H1 (cell line): ENCODE measurements at regions of chr14 and their contacts with region 1.

Region 1: GRCh38 chr14:25132732-25133422 is 82.9 kb upstream of the STXBP6 start:
- DNase-seq: peak; percentile 60 to 78
- H3K4me3 ChIP-seq: peak overlapping the region in 1 of 4 experiments; percentile 28; a peak in 2 of 8 replicates
- H3K27ac ChIP-seq: no peak overlapping the region
- H3K4me1 ChIP-seq: no peaks in the 10 kb centered on the region
- H3K27me3 ChIP-seq: peaks cover 0 to 8% (median 5%) of the 10 kb centered on the region in 4 experiments; a peak in 3 of 7 replicates
- CTCF ChIP-seq: peak; percentile 75 to 87 (median 80)
- EP300 ChIP-seq: no peak
- POLR2A ChIP-seq: no peak
- RAD21 ChIP-seq: peak; percentile 78 to 81

Region 2: GRCh38 chr14:24734878-24735500 is 397.9 kb before region 1 on chr14:
- CTCF ChIA-PET with region 1: interaction called, 15 read pairs
- POLR2A ChIA-PET with region 1: no interaction called
- DNase-seq: no peak
- H3K4me3 ChIP-seq: no peak overlapping the region
- H3K27ac ChIP-seq: no peak overlapping the region
- H3K4me1 ChIP-seq: peaks cover 0 to 3% (median 0%) of the 10 kb centered on the region in 4 experiments; a peak in 3 of 7 replicates
- H3K27me3 ChIP-seq: no peaks in the 10 kb centered on the region
- CTCF ChIP-seq: peak in 2 of 3 experiments; percentile 61 to 65; a peak in 3 of 4 replicates
- EP300 ChIP-seq: no peak
- POLR2A ChIP-seq: no peak
- RAD21 ChIP-seq: peak; percentile 70 to 75

Region 3: GRCh38 chr14:24774187-24774915 is 358.5 kb before region 1 on chr14:
- CTCF ChIA-PET with region 1: no interaction called
- POLR2A ChIA-PET with region 1: no interaction called
- DNase-seq: no peak
- H3K4me3 ChIP-seq: no peak overlapping the region
- H3K27ac ChIP-seq: no peak overlapping the region
- H3K4me1 ChIP-seq: peaks cover 0 to 2% (median 0%) of the 10 kb centered on the region in 4 experiments; a peak in 1 of 7 replicates
- H3K27me3 ChIP-seq: no peaks in the 10 kb centered on the region
- CTCF ChIP-seq: no peak
- EP300 ChIP-seq: no peak
- POLR2A ChIP-seq: no peak
- RAD21 ChIP-seq: no peak

Region 4: GRCh38 chr14:24941719-24942118 is 191.2 kb before region 1 on chr14:
- CTCF ChIA-PET with region 1: no interaction called
- POLR2A ChIA-PET with region 1: no interaction called
- DNase-seq: no peak
- H3K4me3 ChIP-seq: peak overlapping the region in 1 of 4 experiments; percentile 14; a peak in 1 of 8 replicates
- H3K27ac ChIP-seq: peak overlapping the region; percentile 37; the same call in 1 of the 2 replicates
- H3K4me1 ChIP-seq: peaks cover 3 to 18% (median 12%) of the 10 kb centered on the region in 4 experiments; a peak in 5 of 7 replicates
- H3K27me3 ChIP-seq: no peaks in the 10 kb centered on the region
- CTCF ChIP-seq: no peak
- EP300 ChIP-seq: no peak
- POLR2A ChIP-seq: no peak
- RAD21 ChIP-seq: no peak

Region 5: DNA sequence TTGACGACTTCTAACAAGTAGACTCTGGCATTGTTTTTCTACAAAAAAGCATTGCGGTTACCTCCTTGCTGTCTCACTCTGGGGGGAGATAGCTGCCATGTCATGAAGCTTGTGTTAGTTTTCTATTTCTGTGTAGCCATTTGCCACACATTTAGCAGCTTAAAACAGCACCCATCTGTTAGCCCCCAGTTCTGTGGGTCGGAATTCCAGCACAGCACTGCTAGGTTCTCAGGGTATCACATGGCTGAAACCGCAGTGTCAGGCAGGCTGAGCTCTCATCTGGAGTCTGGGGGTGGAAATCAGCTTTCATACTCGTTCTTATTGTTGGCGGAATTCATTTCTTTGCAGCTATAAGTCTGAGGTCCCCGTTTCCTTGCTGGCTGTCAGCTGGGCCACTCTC is 63.0 kb before region 1 on chr14:
- CTCF ChIA-PET with region 1: interaction called, 20 read pairs
- POLR2A ChIA-PET with region 1: no interaction called
- DNase-seq: no peak
- H3K4me3 ChIP-seq: no peak overlapping the region
- H3K27ac ChIP-seq: no peak overlapping the region
- H3K4me1 ChIP-seq: peaks cover 0 to 4% (median 3%) of the 10 kb centered on the region in 4 experiments; a peak in 3 of 7 replicates
- H3K27me3 ChIP-seq: no peaks in the 10 kb centered on the region
- CTCF ChIP-seq: no peak
- EP300 ChIP-seq: no peak
- POLR2A ChIP-seq: no peak
- RAD21 ChIP-seq: no peak

Region 6: GRCh38 chr14:25080682-25081081 is 52.2 kb before region 1 on chr14:
- CTCF ChIA-PET with region 1: interaction called, 10 read pairs
- POLR2A ChIA-PET with region 1: no interaction called
- DNase-seq: no peak
- H3K4me3 ChIP-seq: no peak overlapping the region
- H3K27ac ChIP-seq: no peak overlapping the region
- H3K4me1 ChIP-seq: no peaks in the 10 kb centered on the region
- H3K27me3 ChIP-seq: no peaks in the 10 kb centered on the region
- CTCF ChIP-seq: no peak
- EP300 ChIP-seq: no peak
- POLR2A ChIP-seq: no peak
- RAD21 ChIP-seq: no peak

Region 7: DNA sequence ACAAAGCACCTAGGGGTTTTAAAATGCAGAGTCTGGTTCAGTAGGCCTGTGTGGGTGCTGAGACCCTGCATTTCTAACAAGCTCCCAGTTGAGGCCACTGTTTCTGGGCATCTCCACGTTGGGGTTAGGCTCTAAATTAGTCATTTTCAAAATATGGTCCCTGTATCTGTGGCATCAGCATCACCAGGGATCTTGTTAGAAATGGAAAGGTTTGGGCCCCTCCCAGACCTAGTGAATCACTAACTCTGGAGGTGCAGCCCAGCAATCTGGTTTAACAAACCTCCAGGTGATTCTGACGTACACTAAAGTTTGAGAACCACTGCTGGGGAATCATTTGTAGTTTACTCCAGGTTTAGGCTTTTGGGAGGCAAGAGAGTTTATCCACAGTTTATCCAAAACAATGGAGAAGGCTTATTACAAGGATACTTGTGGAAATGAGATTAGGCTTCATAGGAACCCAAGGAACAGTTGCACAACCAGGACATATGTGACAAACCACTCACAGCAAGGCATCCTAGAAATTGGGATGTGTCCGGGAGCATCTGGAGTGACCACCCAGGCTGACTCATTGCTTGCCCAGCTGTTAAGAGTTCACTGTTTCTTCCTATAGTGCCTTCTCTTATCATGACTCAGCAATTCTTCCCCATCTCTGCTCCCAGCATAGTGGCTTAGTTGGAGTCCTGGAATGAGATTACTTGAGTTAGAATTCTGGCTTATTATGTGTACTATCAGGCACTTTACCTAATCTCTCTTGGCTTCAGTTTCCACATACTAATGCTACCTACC is 11.3 kb before region 1 on chr14:
- CTCF ChIA-PET with region 1: interaction called, 28 read pairs
- POLR2A ChIA-PET with region 1: no interaction called
- DNase-seq: no peak
- H3K4me3 ChIP-seq: no peak overlapping the region
- H3K27ac ChIP-seq: no peak overlapping the region
- H3K4me1 ChIP-seq: peaks cover 0 to 3% (median 0%) of the 10 kb centered on the region in 4 experiments; a peak in 1 of 7 replicates
- H3K27me3 ChIP-seq: no peaks in the 10 kb centered on the region
- CTCF ChIP-seq: no peak
- EP300 ChIP-seq: no peak
- POLR2A ChIP-seq: no peak
- RAD21 ChIP-seq: no peak

Region 8: DNA sequence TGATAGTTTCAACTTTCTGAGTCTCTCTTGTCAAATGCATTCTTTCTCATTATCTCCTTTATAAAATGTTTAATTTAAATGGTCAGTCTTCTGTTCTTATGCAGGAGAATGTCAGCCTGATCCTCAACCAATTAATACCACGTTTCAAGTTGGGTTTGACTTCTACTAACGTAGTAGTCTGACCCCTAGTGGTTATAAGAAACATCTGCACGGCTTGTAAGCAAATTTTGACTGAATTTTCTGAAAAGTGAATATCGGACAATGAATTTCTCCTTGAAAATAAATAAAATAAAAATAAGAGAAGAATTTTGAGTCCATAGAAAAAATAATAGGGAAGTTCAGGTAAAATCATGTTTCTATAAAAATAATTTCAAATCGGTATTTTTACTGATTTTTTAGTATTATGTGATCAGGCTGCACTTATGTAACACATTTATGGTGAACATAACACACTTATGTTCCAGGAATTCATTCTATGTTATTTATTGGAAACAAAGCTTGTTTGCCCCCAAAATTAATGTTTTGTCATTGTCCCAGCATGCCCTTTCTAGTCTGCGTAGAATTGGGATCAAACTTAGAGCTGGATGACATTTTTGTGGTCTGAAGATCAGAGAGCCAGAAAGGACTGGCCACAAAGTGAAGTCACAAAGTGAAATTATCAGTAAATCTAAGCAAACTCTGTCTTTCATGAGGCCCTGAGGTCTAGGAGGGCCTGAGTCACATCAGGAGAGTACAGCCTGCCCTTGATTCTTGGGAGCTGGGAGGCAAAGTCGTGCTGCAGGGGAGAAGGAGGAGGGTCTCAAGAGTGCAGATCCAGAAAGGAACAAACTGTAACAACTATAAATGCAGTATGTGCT is 18.3 kb after region 1 on chr14:
- CTCF ChIA-PET with region 1: interaction called, 20 read pairs
- POLR2A ChIA-PET with region 1: no interaction called
- DNase-seq: no peak
- H3K4me3 ChIP-seq: no peak overlapping the region
- H3K27ac ChIP-seq: no peak overlapping the region
- H3K4me1 ChIP-seq: no peaks in the 10 kb centered on the region
- H3K27me3 ChIP-seq: no peaks in the 10 kb centered on the region
- CTCF ChIP-seq: peak in 2 of 3 experiments; percentile 32 to 63; a peak in 2 of 4 replicates
- EP300 ChIP-seq: no peak
- POLR2A ChIP-seq: no peak
- RAD21 ChIP-seq: peak; percentile 69 to 74

Region 9: DNA sequence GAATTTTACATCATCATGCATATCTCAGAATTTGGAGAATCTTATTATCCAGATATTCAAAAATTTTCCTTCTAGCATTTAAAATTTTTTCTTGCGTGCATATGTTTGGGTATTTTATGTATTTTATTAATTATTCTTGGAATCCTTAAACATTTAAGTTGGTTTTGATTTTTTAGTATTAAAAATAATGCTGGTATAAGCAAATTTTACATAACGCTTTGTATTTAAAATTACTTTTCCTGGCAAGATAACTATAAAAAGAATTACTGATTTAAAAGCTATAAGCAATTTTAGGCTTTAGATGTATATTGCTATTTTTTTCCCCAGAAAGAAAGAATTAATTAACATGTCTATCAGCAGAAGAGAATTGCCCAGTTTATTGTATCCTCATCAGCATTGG is 141.7 kb after region 1 on chr14:
- CTCF ChIA-PET with region 1: no interaction called
- POLR2A ChIA-PET with region 1: no interaction called
- DNase-seq: no peak
- H3K4me3 ChIP-seq: no peak overlapping the region
- H3K27ac ChIP-seq: no peak overlapping the region
- H3K4me1 ChIP-seq: no peaks in the 10 kb centered on the region
- H3K27me3 ChIP-seq: no peaks in the 10 kb centered on the region
- CTCF ChIP-seq: no peak
- EP300 ChIP-seq: no peak
- POLR2A ChIP-seq: no peak
- RAD21 ChIP-seq: no peak

Region 10: DNA sequence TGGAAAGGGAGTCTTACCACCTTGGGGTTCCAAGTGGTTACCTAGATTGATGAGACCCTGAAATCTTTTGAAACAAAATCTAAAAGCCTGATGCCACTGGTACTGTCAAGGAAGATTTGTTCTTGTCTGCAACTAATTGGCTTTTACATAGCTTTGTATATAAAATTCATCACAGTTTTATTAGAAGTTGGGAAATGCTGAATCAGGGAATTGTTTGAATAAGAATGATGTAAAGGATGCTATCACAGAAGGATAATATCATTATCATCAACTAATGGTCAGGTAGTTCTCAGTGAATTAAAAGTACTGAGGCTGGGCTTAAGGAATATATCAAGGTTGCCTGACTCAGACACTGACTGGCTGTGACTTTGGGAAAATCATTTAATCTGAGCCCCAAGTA is 165.4 kb after region 1 on chr14:
- CTCF ChIA-PET with region 1: no interaction called
- POLR2A ChIA-PET with region 1: no interaction called
- DNase-seq: no peak
- H3K4me3 ChIP-seq: no peak overlapping the region
- H3K27ac ChIP-seq: no peak overlapping the region
- H3K4me1 ChIP-seq: no peaks in the 10 kb centered on the region
- H3K27me3 ChIP-seq: no peaks in the 10 kb centered on the region
- CTCF ChIP-seq: no peak
- EP300 ChIP-seq: no peak
- POLR2A ChIP-seq: no peak
- RAD21 ChIP-seq: no peak